AG04449 (cell line): ENCODE measurements at regions of chr12 and their contacts with region 1.

Region 1: DNA sequence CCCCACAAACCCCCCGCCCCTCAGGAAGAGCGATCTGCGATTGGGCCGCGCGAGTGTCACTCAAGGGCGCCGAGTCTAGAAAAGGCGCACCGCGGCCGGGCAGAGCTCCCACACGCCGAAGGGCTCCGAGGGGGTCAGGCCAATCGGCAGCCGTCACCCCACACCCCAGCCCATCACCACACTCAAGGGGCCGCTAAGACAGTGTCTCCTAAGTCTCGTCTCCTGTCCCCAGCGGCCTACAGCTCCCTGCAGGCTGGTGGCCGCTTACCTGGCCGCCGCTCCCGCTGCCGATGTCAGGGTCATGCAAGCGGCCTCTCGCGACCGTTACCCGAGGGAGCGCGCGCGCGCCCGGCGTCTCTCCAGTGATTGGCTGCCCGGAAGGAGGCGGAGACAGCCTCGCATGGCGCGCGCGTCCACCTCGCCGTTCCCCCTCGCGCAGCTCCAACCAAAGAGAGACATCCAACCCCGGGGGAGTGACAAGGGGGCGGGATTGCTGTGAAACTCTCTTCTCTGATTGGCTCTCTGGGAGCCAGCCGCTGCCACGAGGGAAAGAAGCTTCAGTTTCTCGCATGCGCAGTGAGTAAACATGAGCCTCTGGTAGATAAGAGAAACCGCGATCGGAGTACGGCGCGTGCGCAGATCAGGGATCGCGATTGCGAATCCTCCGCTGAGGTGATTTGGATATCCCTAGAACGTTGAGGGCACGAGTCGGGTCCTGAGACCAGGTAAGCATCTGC is at the starts of genes MPHOSPH9 and MTRFR:
- DNase-seq: peak; percentile 95
- H3K4me3 ChIP-seq: peak within 1 kb of the TSS; percentile 98
- CTCF ChIP-seq: no peak

Region 2: DNA sequence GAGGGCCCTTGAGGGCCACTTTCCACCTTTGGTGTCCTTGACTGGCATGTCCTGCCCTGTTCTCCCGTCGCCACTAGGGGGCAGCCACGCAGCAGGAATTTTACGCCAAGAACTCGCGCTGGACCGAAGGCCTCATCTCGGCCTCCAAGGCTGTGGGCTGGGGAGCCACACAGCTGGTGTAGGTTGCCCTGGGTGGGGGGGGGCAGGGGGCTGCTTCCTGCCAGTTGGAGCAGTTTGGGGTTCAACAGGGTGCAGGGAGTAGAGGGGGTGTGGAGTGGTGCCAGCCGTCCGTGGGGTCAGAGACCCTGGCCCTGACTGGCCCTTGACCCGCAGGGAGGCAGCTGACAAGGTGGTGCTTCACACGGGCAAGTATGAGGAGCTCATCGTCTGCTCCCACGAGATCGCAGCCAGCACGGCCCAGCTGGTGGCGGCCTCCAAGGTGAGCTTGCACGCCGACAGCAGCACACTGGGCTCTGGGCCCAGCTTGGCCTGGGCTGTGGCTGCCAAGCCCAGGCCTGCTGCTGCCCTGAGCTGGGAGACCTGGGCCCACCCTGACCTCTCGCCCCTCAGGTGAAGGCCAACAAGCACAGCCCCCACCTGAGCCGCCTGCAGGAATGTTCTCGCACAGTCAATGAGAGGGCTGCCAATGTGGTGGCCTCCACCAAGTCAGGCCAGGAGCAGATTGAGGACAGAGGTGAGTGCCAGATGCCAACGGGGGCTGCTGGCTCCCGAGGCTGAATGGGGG is 372.5 kb before region 1 on chr12:
- CTCF ChIA-PET with region 1: interaction called, 19 read pairs
- POLR2A ChIA-PET with region 1: interaction called, 5 read pairs
- DNase-seq: no peak
- H3K4me3 ChIP-seq: no peak overlapping the region
- CTCF ChIP-seq: peak; percentile 95

Region 3: GRCh38 chr12:122974274-122974891 is 258.6 kb before region 1 on chr12:
- CTCF ChIA-PET with region 1: interaction called, 21 read pairs
- POLR2A ChIA-PET with region 1: interaction called, 25 read pairs
- DNase-seq: peak; percentile 89
- H3K4me3 ChIP-seq: peak overlapping the region; percentile 99
- CTCF ChIP-seq: no peak

Region 4: DNA sequence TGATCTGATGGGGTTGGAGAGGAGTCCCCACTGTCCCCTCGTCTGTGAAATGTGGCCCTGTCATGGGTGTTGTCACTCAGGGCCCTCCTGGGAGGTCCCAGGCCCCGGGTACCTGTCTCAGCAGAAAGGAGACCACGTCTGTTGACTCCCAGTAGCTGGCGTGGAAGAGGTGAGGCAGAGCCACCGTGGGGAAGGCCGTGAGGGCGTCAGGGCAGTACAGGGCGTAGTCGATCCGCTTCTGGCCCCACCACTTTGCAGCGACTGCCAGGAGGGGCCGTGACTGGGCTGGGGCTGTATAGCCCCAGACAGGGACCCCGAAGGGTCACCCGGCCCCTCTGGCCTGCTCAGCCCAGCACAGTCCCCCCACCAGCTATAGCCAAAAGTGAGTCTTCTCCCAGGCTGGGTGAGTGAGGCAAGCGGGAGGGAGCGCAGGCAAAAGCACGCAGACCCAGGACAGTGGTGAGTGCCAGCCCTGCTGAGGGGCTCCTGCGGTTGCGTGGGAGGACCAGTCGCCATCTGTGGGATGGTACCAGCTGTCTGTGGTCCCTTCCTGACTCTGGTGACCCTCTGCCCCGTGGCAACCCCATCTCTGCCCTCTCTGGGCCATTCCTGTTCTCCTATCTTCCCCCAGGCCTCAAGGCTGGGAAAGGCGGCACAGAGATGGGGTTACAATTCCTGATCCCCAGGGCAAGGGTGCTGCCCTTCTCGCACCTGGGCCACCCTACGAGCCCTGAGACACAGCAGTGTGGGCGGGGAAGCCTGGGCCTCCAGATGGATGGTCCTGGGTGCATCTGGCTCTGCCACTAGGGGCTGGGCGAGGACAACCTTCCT is 244.1 kb before region 1 on chr12:
- CTCF ChIA-PET with region 1: interaction called, 27 read pairs
- POLR2A ChIA-PET with region 1: interaction called, 6 read pairs
- DNase-seq: no peak
- H3K4me3 ChIP-seq: no peak overlapping the region
- CTCF ChIP-seq: no peak

Region 5: GRCh38 chr12:123250484-123251383 is 17.8 kb after region 1 on chr12:
- CTCF ChIA-PET with region 1: interaction called, 69 read pairs
- POLR2A ChIA-PET with region 1: interaction called, 4 read pairs
- DNase-seq: no peak
- H3K4me3 ChIP-seq: no peak overlapping the region
- CTCF ChIP-seq: no peak

Region 6: DNA sequence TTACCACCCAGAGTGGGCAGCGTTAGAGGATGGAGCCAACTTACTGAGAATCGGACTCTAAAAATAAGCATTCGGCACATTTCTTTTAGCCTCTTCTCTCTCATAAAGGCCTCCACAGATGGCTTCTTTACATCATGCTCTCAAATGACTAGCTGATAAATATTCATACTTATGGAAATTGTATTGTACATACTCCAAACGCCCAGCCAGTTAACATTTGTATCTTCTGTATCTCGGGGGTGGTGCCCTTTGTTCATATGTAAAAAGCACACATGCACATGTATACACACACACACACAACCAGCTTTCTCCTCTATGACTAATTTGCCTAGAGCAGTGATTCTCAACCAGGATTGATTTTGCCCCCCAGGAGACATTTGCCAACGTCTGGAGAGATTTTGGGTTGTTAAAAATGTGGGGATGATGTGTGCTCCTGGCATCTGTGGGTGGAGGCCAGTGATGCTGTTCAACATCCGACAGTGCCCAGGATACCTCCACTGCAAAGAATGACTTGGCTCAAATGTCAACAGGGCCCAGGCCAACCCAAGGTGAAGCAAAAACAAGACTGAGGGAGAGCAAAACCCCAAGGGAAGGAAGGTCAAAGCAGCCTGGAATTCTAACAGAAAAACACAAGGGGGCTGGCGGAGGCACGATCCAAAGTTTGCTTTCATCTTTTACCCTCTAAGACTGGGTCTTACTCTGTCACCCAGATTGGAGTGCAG is 53.8 kb after region 1 on chr12:
- CTCF ChIA-PET with region 1: no interaction called
- POLR2A ChIA-PET with region 1: no interaction called
- DNase-seq: no peak
- H3K4me3 ChIP-seq: no peak overlapping the region
- CTCF ChIP-seq: no peak

Region 7: DNA sequence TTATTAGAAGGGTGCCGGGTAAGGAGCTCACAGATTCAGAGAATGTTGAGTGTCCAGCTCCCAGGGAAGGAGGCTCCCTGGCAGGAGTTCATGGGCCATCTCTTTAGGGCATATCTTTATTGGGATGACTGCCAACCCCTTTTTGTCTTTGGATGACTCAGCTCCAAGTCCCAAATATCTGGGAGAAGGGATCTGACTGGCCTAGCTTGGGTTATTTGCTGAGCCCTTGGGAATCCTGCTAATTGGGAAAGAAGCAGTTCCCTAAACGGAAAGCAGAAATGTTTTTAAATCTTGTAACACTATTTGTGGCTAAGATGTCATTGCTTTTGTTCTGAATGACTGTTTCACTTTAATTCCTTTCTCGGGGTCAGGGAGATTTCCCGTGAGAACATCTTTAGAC is 381.6 kb after region 1 on chr12:
- CTCF ChIA-PET with region 1: no interaction called
- POLR2A ChIA-PET with region 1: no interaction called
- DNase-seq: no peak
- H3K4me3 ChIP-seq: no peak overlapping the region
- CTCF ChIP-seq: no peak